ENCODE measurements at regions of chr3 and their contacts with region 1.

Region 1: DNA sequence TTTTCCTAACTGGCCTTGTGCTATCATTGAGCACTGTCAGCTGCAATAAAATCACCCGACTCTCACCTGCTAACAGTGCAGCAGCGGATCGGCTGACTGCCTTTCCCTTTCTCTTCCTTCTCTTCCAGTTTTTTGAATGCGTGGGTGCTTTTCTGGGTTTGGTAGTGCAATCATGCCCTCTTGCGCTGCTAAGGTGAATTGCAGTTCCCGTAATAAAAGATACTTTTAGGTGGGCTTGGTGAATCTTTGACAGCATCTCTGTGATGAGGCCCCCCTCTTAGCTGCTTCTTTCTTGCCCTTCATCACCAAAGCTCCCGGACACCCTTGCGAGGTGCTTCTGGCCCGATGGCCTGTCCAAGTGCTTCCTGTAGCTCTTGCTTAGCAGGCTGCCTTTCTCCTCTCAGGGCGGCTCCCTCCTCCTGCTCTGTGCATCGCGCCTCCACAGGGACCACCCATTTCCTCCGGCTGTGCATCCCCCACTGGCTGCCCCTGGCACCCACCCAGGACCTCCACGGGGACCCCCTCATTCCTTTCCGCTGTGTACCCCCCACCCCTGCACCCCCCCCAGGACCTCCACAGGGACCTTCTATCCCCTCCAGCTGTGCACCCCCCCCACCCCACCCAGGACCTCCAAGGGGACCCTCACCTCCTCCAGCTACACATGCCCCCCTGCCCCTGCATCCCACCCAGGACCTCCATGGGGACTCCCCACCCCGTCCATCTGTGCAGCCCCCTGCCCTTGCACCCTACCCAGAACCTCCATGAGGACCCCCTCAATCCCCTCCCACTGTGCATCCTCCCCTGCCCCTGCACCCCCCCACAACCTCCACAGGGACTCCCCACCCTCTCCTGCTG is 50.8 kb upstream of the RPL32 start:
- H3K4me3 Mint-ChIP-seq: peak overlapping the region; percentile 37
- H3K27ac Mint-ChIP-seq: no peak overlapping the region
- H3K4me1 Mint-ChIP-seq: peaks cover 7% of the 10 kb centered on the region
- H3K27me3 Mint-ChIP-seq: peaks cover 43% of the 10 kb centered on the region

Region 2: GRCh38 chr3:12706504-12707253 is 185.5 kb before region 1 on chr3:
- intact Hi-C with region 1: loop called (anchors 10 kb)
- H3K4me3 Mint-ChIP-seq: no peak overlapping the region
- H3K27ac Mint-ChIP-seq: no peak overlapping the region
- H3K4me1 Mint-ChIP-seq: peaks cover 12% of the 10 kb centered on the region
- H3K27me3 Mint-ChIP-seq: peaks cover 5% of the 10 kb centered on the region

Region 3: GRCh38 chr3:12785096-12785495 is 107.1 kb before region 1 on chr3:
- intact Hi-C with region 1: loop called (anchors 5 kb)
- H3K4me3 Mint-ChIP-seq: no peak overlapping the region
- H3K27ac Mint-ChIP-seq: no peak overlapping the region
- H3K4me1 Mint-ChIP-seq: no peaks in the 10 kb centered on the region
- H3K27me3 Mint-ChIP-seq: peaks cover 29% of the 10 kb centered on the region

Region 4: DNA sequence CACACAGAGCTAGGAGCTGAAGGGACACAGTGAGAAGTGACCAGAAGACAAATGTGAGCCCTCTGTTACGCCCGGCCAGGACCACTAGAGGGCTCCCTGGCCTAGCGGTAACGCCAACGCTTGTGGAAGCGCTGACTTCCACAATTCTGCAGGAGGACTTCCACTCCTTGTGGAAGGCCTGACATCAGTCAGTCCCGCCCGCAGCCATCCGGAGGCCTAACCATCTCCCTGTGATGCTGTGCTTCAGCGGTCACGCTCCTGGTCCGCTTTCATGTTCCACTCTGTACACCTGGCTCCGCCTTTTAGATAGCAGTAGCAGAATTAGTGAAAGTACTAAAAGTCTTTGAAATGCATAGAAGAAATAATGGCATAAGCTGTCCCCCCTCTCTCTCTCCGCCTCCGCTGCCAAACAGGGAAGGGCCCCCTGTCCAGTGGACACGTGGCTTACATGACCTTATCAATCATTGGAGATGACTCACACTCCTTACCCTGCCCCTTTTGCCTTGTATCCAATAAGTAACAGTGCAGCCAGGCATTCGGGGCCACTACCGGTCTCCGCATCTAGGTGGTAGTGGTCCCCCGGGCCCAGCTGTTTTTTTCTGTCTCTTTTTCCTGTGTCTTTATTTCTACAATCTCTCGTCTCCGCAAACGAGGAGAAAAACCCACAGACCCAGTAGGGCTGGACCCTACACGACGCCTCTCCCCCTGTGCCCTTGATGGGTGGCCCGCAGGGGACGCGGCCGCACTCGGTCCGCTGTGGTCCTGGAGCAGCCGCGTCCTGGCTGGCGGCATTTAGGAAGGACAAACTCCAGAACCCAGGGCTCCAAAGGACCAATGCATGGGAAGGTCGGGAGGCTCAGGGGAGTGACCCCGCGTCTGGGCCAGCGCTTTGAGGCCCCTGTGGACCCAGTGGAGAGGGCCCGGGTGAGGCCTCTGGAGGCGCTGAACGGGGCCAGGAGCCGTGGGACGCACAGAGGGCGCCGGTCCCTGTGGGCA is 23.9 kb before region 1 on chr3:
- intact Hi-C with region 1: loop called (anchors 1 kb)
- H3K4me3 Mint-ChIP-seq: peak overlapping the region; percentile 57
- H3K27ac Mint-ChIP-seq: peak overlapping the region; percentile 80
- H3K4me1 Mint-ChIP-seq: peaks cover 19% of the 10 kb centered on the region
- H3K27me3 Mint-ChIP-seq: peaks cover 48% of the 10 kb centered on the region

Region 5: DNA sequence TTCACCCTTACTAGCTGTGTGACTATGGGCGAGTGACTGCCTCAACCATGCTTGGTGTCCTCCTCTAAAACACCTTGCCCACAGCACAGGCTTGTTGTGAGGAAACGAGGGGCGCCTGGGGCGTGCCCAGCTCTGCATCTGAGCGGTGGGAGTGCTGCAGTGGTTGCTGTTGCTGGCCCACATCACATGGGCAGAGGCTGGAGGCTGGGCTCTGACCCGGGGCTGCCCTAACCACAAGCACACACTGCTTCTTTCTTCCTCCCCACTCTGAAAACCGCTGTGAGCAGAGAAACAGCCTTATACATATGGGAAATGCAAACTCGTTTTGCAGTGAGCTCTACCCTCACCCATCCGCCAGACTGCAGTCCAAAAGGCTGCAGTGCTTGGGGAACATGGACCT is 23.9 kb after region 1 on chr3:
- intact Hi-C with region 1: no loop called
- H3K4me3 Mint-ChIP-seq: no peak overlapping the region
- H3K27ac Mint-ChIP-seq: no peak overlapping the region
- H3K4me1 Mint-ChIP-seq: no peaks in the 10 kb centered on the region
- H3K27me3 Mint-ChIP-seq: no peaks in the 10 kb centered on the region

Region 6: GRCh38 chr3:12984023-12984823 is 92.0 kb after region 1 on chr3:
- intact Hi-C with region 1: loop called (anchors 10 kb)
- H3K4me3 Mint-ChIP-seq: no peak overlapping the region
- H3K27ac Mint-ChIP-seq: no peak overlapping the region
- H3K4me1 Mint-ChIP-seq: peaks cover 54% of the 10 kb centered on the region
- H3K27me3 Mint-ChIP-seq: no peaks in the 10 kb centered on the region

Measured in dendritic cell treated with granulocyte-macrophage colony-stimulating factor and Interleukin-4, amounts not matched to agents 40 ng/mL and 50 ng/mL, for 4 days (primary cell).